ENCODE measurements at regions of chr9 and their contacts with region 1.

Region 1: GRCh38 chr9:35657546-35658136 is at the start of gene RMRP:
- DNase-seq: peak; percentile 94 to 99
- ATAC-seq: peak; percentile 84
- total RNA-seq, gene RMRP: 19,198 to 30,979 TPM

Region 2: DNA sequence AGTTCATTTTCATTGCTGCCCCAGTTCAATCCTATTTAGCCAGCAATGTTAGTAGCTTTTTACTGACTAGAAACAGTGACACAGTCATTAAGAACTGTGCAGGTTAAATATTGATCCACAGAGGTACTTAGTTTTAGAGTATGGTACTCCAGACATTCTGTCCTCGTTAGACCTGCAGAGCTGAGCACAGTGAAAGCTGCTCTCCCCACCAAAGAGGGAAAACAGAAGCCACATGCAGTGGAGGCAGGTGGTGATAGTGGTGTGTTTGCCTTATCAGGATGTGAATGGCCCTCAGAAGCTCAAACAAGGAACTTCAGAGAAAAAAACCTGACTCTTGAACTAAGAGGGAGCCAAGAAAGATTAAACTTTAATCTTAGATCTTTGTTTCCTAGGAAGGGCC is 420.3 kb before region 1 on chr9:
- intact Hi-C with region 1: no loop called
- DNase-seq: peak; percentile 29 to 52
- ATAC-seq: peak; percentile 85

Region 3: DNA sequence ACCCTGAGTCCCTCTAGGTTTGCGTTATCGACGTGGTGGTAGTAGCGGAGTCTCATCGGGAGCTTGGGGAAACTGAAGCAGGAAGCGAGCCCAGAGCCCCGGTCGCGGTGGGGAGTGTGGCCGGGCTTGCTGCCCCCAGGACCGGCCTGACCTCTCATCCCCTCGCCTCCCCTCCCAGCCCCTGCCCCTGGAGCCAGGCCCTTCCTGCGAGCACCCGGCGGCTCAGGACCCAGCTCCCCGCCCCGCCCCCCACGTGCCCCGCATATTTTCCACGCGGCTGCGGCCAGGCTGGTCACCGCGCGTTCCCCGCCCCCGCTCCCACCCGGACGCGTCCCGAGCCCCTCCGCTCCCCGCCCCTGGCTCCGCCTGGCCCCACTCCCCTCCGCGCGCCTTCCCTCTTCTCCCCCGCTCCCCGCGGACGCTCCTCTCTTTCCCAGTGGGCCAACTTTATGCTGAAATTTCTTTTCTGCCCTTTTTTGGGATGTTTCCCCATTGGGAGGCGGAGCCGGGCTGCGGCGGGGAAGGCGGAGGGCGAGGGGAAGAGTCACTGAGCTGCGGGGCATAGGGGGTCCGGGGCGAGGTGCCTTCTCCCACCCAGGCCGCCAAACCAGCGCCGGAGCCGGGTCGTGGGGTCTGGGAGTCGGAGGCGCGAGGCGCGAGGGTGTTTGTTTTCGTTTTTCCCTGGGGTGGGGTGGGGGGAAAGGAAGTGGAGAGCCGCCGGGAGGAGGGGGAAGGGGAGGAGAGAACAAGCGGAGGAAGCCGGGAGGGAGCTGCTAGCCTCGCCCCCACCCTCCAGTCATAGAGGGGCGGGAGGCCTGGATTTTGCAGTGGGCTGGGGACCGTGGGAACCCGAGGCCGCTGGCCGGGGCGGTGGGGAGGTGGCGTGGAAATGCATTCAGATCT is 33.0 kb after region 1 on chr9:
- intact Hi-C with region 1: loop called in 1 of 2 experiments (anchors 5 kb)
- DNase-seq: peak; percentile 73 to 79
- ATAC-seq: peak; percentile 61

Region 4: GRCh38 chr9:35732122-35732799 is 74.6 kb after region 1 on chr9 and contains the starts of genes CREB3 and TLN1:
- intact Hi-C with region 1: loop called in 1 of 2 experiments (anchors 10 kb)
- DNase-seq: peak; percentile 97 to 99
- ATAC-seq: peak; percentile 78
- total RNA-seq, gene CREB3: 40.2 to 40.6 TPM
- total RNA-seq, gene TLN1: 142 to 172 TPM